Activated CD4-positive, alpha-beta T cell treated with anti-CD3 and anti-CD28 coated beads for 36 hours (primary cell): ENCODE measurements at regions of chr22 and their contacts with region 1.

Region 1: GRCh38 chr22:42114721-42115120 is 15.9 kb downstream of the CYP2D6 start:
- DNase-seq: peak; percentile 36
- ATAC-seq: no peak
- H3K4me3 Mint-ChIP-seq: no peak overlapping the region
- H3K27ac Mint-ChIP-seq: no peak overlapping the region
- H3K4me1 Mint-ChIP-seq: peaks cover 7% of the 10 kb centered on the region
- H3K27me3 Mint-ChIP-seq: no peaks in the 10 kb centered on the region

Region 2: DNA sequence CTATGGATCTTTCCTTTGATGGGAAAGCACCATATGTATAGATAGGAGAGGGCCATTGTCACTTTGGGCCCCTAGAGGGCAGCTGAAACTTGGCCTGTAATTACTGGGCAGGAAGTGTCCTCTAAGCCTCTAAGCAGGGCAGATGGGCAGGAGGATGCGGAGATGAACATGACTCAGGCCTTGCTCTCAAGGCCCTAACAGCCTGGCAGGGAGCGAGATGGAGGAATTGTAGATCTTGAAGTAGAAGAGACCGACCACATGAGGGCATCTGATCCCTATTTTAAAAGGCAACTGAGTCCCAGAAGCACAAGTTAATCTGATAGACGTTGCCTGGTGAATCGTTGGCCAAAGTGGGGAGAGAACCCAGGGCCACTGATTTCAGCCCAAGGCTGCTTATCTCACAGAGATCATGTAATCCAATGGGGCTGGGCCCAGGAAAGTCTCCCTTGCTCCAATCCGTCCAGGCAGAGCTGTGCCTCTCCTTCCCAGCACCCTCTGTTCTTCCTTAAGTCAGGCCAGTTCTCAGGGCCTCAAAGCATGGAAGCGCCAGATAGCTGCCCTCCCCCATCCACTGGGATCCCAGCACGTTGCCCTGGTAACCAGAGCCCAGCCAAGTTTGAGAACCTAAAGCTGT is 148.0 kb before region 1 on chr22:
- CTCF ChIA-PET with region 1: no interaction called
- POLR2A ChIA-PET with region 1: no interaction called
- intact Hi-C with region 1: loop called in 1 of 2 experiments (anchors 1 kb)
- DNase-seq: peak; percentile 66
- ATAC-seq: peak; percentile 86
- H3K4me3 Mint-ChIP-seq: no peak overlapping the region
- H3K27ac Mint-ChIP-seq: peak overlapping the region; percentile 42
- H3K4me1 Mint-ChIP-seq: peaks cover 5% of the 10 kb centered on the region
- H3K27me3 Mint-ChIP-seq: no peaks in the 10 kb centered on the region

Region 3: DNA sequence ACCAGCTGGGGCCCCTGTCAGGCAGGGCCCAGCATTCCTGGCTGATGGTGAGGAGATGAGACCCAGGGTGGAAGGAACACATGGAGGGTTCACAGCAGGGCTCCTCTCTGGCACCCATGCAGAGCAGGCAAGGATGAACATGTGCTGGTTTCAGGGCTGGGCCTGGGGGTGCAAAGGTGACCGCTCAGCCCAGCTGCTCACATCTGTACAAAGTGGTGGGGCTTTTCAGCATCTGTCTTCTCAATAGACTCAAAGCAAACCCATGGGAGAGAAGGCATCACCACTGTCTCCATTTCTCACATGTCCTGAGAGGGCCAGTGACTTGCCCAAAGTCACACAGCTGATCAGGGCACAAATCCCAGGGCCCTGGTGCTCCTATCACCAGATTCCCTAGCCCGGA is 183.1 kb after region 1 on chr22:
- CTCF ChIA-PET with region 1: no interaction called
- POLR2A ChIA-PET with region 1: interaction called, 10 read pairs
- intact Hi-C with region 1: no loop called
- DNase-seq: no peak
- ATAC-seq: no peak
- H3K4me3 Mint-ChIP-seq: no peak overlapping the region
- H3K27ac Mint-ChIP-seq: no peak overlapping the region
- H3K4me1 Mint-ChIP-seq: peaks cover 81% of the 10 kb centered on the region
- H3K27me3 Mint-ChIP-seq: no peaks in the 10 kb centered on the region